ENCODE measurements at regions of chr12 and their contacts with region 1.

Region 1: GRCh38 chr12:23686095-23686494 is 263.4 kb downstream of the SOX5 start:
- DNase-seq: peak; percentile 10
- H3K4me3 ChIP-seq: no peak overlapping the region
- H3K27ac ChIP-seq: no peak overlapping the region
- H3K4me1 ChIP-seq: no peaks in the 10 kb centered on the region
- H3K27me3 ChIP-seq: no peaks in the 10 kb centered on the region
- CTCF ChIP-seq: no peak
- POLR2A ChIP-seq: no peak

Region 2: GRCh38 chr12:23504043-23504442 is 182.1 kb before region 1 on chr12:
- CTCF ChIA-PET with region 1: no interaction called
- POLR2A ChIA-PET with region 1: no interaction called
- dilution Hi-C with region 1: no loop called
- intact Hi-C with region 1: no loop called
- DNase-seq: no peak
- H3K4me3 ChIP-seq: no peak overlapping the region
- H3K27ac ChIP-seq: no peak overlapping the region
- H3K4me1 ChIP-seq: no peaks in the 10 kb centered on the region
- H3K27me3 ChIP-seq: no peaks in the 10 kb centered on the region
- CTCF ChIP-seq: no peak
- POLR2A ChIP-seq: no peak

Region 3: GRCh38 chr12:23703051-23703450 is 17.0 kb after region 1 on chr12:
- CTCF ChIA-PET with region 1: interaction called, 11 read pairs
- POLR2A ChIA-PET with region 1: no interaction called
- dilution Hi-C with region 1: no loop called
- intact Hi-C with region 1: no loop called
- DNase-seq: no peak
- H3K4me3 ChIP-seq: no peak overlapping the region
- H3K27ac ChIP-seq: no peak overlapping the region
- H3K4me1 ChIP-seq: no peaks in the 10 kb centered on the region
- H3K27me3 ChIP-seq: no peaks in the 10 kb centered on the region
- CTCF ChIP-seq: no peak
- POLR2A ChIP-seq: no peak

Region 4: GRCh38 chr12:23729359-23729758 is 43.3 kb after region 1 on chr12:
- CTCF ChIA-PET with region 1: no interaction called
- POLR2A ChIA-PET with region 1: no interaction called
- dilution Hi-C with region 1: no loop called
- intact Hi-C with region 1: no loop called
- DNase-seq: peak; percentile 55
- H3K4me3 ChIP-seq: no peak overlapping the region
- H3K27ac ChIP-seq: peak overlapping the region; percentile 10
- H3K4me1 ChIP-seq: peaks cover 9% of the 10 kb centered on the region
- H3K27me3 ChIP-seq: no peaks in the 10 kb centered on the region
- CTCF ChIP-seq: no peak
- POLR2A ChIP-seq: no peak

Region 5: GRCh38 chr12:24078318-24078765 is 392.2 kb after region 1 on chr12:
- CTCF ChIA-PET with region 1: no interaction called
- POLR2A ChIA-PET with region 1: no interaction called
- dilution Hi-C with region 1: no loop called
- intact Hi-C with region 1: no loop called
- DNase-seq: no peak
- H3K4me3 ChIP-seq: no peak overlapping the region
- H3K27ac ChIP-seq: no peak overlapping the region
- H3K4me1 ChIP-seq: no peaks in the 10 kb centered on the region
- H3K27me3 ChIP-seq: peaks cover 0 to 4% of the 10 kb centered on the region in 2 experiments
- CTCF ChIP-seq: no peak
- POLR2A ChIP-seq: no peak